ENCODE measurements at regions of chr6 and their contacts with region 1.

Region 1: GRCh38 chr6:122530440-122531046 is 58.9 kb upstream of the SERINC1 start:
- DNase-seq: peak; percentile 29
- H3K4me3 ChIP-seq: no peak overlapping the region
- H3K27ac ChIP-seq: no peak overlapping the region
- H3K27me3 ChIP-seq: no peaks in the 10 kb centered on the region
- CTCF ChIP-seq: peak; percentile 98

Region 2: DNA sequence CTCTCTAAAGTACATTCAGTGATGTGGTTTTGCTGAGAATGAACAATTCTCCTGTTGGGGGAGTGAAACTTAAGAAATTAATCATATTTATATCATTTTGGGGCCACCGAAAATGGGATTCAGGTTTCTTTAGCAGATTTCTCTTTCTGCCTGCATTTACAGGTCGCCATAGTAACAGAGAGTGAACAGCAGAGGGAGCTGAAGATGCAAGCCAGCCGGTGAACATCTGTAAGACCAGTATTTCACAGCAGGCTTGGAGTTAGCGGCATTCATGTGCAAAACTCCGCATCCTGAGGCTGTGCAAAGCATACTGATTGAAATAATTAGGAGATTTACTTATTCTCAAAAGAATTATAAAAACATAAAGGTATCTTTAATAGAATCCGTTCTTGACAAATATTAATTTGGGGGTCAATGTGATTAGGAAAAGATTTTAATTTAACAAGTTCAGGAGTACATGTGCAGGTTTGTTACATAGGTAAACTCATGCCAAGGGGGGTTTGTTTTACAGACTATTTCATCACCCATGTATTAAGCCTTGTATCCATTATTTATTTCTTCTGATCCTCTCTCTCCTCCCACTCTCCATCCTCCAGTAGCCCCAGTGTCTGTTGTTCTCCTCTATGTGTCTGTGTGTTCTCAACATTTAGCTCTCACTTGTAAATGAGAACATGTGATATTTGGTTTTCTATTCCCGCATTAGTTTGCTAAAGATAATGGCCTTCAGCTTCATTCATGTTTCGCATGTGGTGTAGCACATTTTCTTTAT is 148.9 kb before region 1 on chr6:
- CTCF ChIA-PET with region 1: interaction called, 118 read pairs
- POLR2A ChIA-PET with region 1: no interaction called
- DNase-seq: peak; percentile 71
- H3K4me3 ChIP-seq: no peak overlapping the region
- H3K27ac ChIP-seq: no peak overlapping the region
- H3K27me3 ChIP-seq: peaks cover 2% of the 10 kb centered on the region
- CTCF ChIP-seq: peak; percentile 81

Region 3: DNA sequence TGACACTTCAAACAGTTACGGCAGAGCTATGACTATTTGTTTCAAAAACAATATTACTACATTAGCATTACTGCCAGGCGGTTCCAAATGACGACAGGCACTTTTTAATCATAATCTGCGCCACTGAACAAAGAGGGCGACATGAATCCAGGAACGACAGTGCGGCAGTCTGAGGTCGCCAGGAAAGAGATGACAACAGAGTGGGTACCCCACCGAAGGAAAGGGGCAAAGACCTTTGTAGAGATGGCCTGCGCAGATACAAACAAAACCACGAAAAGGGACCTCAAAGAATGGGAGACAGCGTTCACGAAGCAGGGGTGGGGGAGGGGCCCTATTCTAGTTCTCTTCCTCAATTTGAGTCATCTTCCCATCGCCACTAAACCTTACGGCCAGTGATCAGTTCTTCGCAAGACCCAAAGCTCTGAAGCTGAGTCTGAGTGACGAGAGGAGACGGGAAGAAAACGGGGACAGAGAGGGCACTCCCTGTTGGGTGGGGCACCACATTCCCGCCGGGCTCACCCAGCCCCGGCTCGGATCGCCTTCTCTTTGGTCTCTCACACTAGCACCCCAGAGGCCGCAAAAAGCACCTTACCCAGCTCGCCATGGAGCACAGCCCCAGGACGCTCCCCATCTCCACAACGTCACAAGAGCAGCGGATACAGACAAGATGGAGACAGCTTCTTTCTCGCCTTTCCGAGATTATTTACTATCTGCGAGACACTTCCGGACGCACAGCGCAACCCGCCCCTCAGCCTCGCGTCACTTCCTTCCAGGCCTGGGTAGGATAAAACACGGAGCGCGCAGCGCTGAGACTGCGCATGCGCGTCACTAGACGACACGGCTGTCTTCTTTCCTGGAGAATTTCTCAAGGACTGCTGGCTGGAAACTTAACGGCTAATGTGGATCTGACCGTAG is 59.2 kb before region 1 on chr6 and contains the start of gene SERINC1:
- CTCF ChIA-PET with region 1: interaction called, 55 read pairs
- POLR2A ChIA-PET with region 1: no interaction called
- DNase-seq: peak; percentile 88
- H3K4me3 ChIP-seq: peak within 1 kb of the TSS; percentile 95
- H3K27ac ChIP-seq: peak within 1 kb of the TSS; percentile 71
- H3K27me3 ChIP-seq: no peaks in the 10 kb centered on the region
- CTCF ChIP-seq: no peak
- polyA plus RNA-seq, gene SERINC1: 141 and 186 TPM in 2 replicates

Region 4: GRCh38 chr6:122484760-122485159 is 45.8 kb before region 1 on chr6:
- CTCF ChIA-PET with region 1: interaction called, 271 read pairs
- POLR2A ChIA-PET with region 1: no interaction called
- DNase-seq: no peak
- H3K4me3 ChIP-seq: no peak overlapping the region
- H3K27ac ChIP-seq: no peak overlapping the region
- H3K27me3 ChIP-seq: no peaks in the 10 kb centered on the region
- CTCF ChIP-seq: no peak

Region 5: DNA sequence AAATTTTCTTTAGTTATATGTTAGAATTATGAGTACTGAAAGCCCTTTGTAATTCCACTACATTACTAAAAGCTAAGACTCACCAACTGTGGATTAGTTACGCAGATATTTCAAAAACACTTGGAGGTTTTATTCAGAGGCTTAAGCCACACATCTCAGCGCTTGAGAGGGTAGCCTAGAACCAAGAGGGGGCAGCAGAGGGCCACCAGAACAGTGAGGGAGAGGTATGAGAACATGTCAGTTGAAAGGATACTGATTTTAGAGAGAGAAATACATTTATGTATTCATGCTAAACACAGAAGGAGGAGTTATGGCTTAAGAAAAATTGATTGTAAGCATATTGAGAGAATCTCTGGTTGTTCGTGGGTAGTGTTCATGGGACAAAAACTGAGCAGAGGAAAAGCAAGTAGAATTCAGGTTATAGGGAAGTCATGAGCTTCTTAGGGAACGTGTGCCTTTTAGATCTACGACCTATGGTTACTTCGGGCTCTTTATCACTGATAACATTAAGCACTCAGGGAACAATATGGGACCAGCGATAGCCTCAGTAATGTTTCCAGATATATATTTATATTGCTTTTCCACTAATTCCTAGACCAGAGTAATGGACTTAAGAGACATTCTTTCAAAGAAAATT is 38.5 kb before region 1 on chr6:
- CTCF ChIA-PET with region 1: interaction called, 271 read pairs
- POLR2A ChIA-PET with region 1: interaction called, 3 read pairs
- DNase-seq: peak; percentile 36
- H3K4me3 ChIP-seq: no peak overlapping the region
- H3K27ac ChIP-seq: no peak overlapping the region
- H3K27me3 ChIP-seq: no peaks in the 10 kb centered on the region
- CTCF ChIP-seq: peak; percentile 98

Region 6: GRCh38 chr6:122511193-122511924 is 19.2 kb before region 1 on chr6:
- CTCF ChIA-PET with region 1: interaction called, 16 read pairs
- POLR2A ChIA-PET with region 1: no interaction called
- DNase-seq: no peak
- H3K4me3 ChIP-seq: no peak overlapping the region
- H3K27ac ChIP-seq: no peak overlapping the region
- H3K27me3 ChIP-seq: no peaks in the 10 kb centered on the region
- CTCF ChIP-seq: no peak

Region 7: DNA sequence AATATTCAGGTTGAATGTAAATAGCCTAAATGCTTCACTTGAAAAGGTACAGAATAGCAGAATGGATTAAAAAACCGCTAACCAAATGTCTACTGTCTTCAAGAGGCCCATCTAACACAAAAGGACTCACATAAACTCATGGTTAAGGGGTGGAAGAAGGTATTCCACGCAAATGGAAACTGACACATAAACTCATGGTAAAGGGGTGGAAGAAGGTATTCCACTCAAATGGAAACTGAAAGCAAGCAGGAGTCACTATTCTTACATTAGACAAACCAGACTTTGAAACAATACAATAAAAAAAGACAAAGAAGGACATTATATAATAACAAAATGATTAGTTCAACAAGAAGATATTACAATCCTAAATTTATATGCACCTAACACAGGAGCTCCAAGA is 41.3 kb after region 1 on chr6:
- CTCF ChIA-PET with region 1: no interaction called
- POLR2A ChIA-PET with region 1: no interaction called
- DNase-seq: no peak
- H3K4me3 ChIP-seq: no peak overlapping the region
- H3K27ac ChIP-seq: no peak overlapping the region
- H3K27me3 ChIP-seq: no peaks in the 10 kb centered on the region
- CTCF ChIP-seq: no peak